PC-9 (cell line): ENCODE measurements at regions of chr7 and their contacts with region 1.

Region 1: DNA sequence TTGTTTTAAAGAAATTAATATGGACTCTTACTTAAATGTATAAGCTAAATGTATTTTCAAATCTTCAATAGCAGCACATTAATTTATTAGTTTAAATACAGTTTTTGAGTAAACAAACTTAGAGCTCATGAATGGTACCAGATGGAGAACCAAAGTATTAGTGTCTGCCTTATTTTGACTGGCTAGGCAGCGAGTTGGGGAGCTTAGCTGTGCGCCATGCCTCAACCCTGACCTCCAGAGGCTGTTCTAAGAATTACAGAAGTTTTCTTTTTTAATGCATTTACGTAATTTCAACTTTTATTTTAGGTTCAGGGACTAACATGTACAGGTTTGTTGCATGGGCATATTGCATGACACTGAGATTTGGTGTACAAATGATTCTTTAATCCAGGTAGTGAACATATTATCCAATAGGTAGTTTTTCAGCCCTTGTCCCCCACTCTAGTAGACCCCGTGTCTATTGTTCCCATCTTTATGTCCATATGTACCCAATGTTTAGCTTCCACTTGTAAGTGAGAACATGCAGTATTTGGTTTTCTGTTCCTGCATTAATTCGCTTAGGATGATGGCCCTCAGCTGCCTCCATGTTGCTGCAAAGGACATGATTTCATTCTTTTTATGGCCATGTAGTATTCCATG is 166.8 kb downstream of the IQUB start:
- DNase-seq: peak in 1 of 2 experiments; percentile 15
- H3K4me3 ChIP-seq: no peak overlapping the region
- H3K27ac ChIP-seq: no peak overlapping the region
- H3K4me1 ChIP-seq: no peaks in the 10 kb centered on the region
- H3K27me3 ChIP-seq: no peaks in the 10 kb centered on the region
- CTCF ChIP-seq: peak; percentile 81

Region 2: DNA sequence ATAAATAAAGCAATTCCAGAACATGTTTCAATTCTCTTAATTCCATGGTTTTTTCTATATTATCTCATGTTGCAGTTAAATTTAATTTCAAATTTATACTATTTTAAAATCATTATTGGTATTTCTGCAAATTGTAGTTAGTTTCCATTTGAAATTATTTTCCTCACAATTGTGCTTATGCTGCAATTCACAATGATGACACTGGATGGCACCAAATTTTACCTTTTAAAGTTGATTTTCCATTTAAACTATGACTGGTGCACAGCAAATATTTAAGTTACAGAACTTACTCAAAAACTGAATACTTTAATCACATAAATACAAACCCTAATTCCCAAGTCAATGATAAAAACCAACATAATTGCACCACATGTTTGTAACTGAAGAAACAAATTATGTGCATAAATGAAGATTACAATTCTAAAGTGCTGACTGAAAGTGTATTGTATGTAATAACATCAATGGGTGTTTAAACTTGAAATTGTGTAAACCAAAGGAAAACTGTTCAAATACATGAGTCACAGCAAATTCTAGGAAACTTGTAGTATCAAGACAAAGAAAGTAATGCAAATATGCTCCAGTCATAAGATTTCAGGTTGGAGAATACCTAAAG is 1148.2 kb before region 1 on chr7:
- CTCF ChIA-PET with region 1: no interaction called
- POLR2A ChIA-PET with region 1: no interaction called
- intact Hi-C with region 1: loop called (anchors 5 kb)
- DNase-seq: no peak
- H3K4me3 ChIP-seq: no peak overlapping the region
- H3K27ac ChIP-seq: no peak overlapping the region
- H3K4me1 ChIP-seq: no peaks in the 10 kb centered on the region
- H3K27me3 ChIP-seq: no peaks in the 10 kb centered on the region
- CTCF ChIP-seq: peak; percentile 85

Region 3: GRCh38 chr7:122803323-122803722 is 564.3 kb before region 1 on chr7:
- CTCF ChIA-PET with region 1: interaction called, 5 read pairs
- POLR2A ChIA-PET with region 1: no interaction called
- intact Hi-C with region 1: loop called (anchors 1 kb)
- DNase-seq: peak in 1 of 2 experiments; percentile 21
- H3K4me3 ChIP-seq: no peak overlapping the region
- H3K27ac ChIP-seq: no peak overlapping the region
- H3K4me1 ChIP-seq: no peaks in the 10 kb centered on the region
- H3K27me3 ChIP-seq: no peaks in the 10 kb centered on the region
- CTCF ChIP-seq: peak; percentile 62

Region 4: DNA sequence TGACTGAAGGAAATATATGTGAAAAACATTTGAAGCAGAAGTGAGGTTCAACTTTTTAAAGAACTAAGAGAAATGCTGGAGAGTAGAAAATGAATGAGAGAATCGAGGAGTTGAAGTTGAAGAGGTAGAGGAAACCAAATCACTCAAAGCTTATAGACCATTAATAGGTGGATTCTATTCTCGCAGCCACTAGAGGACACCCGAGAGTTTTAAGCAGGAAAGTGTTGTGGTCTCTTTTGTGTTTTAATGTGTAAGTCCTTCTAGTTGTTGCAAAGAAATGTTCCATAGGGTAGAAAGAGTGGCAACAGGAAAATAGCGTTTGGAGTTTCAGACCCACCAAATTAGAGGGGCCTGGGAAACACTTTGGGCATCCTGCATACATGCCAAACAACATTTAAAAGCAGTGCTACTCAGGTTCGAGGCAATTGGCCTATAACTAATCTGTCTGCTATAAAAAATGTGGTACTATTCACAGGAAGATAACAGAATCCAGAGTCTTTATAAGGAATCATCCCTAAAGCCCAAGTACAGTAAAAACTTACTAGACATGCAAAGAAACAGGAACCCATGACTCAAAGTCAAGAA is 296.8 kb before region 1 on chr7:
- CTCF ChIA-PET with region 1: no interaction called
- POLR2A ChIA-PET with region 1: no interaction called
- intact Hi-C with region 1: loop called (anchors 1 kb)
- DNase-seq: peak in 1 of 2 experiments; percentile 12
- H3K4me3 ChIP-seq: no peak overlapping the region
- H3K27ac ChIP-seq: no peak overlapping the region
- H3K4me1 ChIP-seq: no peaks in the 10 kb centered on the region
- H3K27me3 ChIP-seq: no peaks in the 10 kb centered on the region
- CTCF ChIP-seq: peak; percentile 66

Region 5: DNA sequence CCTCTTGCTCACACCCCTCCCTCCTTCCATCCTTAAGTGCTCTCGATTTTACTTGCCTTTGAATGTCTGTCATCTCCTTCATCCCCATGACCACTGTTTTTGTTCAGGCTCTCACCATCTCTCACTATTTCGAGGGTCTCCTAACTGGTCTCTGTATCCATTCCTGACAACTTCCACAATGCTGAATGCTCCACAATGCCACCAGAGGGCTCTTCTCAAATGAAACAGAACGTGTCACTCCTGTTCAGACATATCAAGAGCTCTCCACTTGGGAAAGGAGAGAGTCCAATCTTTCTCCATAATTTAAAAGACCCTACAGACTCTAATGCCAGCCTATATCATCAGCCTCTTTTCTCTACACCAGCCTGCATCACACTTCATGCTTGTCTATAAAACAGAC is 158.8 kb before region 1 on chr7:
- CTCF ChIA-PET with region 1: interaction called, 7 read pairs
- POLR2A ChIA-PET with region 1: no interaction called
- intact Hi-C with region 1: loop called (anchors 2 kb)
- DNase-seq: no peak
- H3K4me3 ChIP-seq: no peak overlapping the region
- H3K27ac ChIP-seq: no peak overlapping the region
- H3K4me1 ChIP-seq: no peaks in the 10 kb centered on the region
- H3K27me3 ChIP-seq: no peaks in the 10 kb centered on the region
- CTCF ChIP-seq: peak; percentile 40; the same call in 1 of the 2 replicates

Region 6: DNA sequence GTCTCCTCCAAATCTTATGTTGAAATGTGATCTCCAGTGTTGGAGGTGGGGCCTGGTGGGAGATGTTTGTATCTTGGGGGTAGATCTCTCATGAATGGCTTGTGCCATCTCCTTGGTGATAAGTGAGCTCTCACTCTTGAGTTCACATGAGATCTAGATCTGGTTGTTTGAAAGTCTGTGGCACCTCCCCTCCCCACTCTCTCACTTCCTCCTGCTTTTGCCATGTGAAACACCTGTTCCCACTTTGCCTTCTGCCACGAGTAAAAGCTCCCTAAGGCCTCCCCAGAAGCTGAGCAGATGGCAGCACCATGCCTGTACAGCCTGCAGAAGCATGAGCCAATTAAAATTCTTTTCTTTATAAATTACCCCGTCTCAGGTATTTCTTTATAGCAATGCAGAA is 641.7 kb after region 1 on chr7:
- CTCF ChIA-PET with region 1: no interaction called
- POLR2A ChIA-PET with region 1: no interaction called
- intact Hi-C with region 1: no loop called
- DNase-seq: no peak
- H3K4me3 ChIP-seq: no peak overlapping the region
- H3K27ac ChIP-seq: no peak overlapping the region
- H3K4me1 ChIP-seq: no peaks in the 10 kb centered on the region
- H3K27me3 ChIP-seq: no peaks in the 10 kb centered on the region
- CTCF ChIP-seq: no peak